GM10248 (cell line): ENCODE measurements at regions of chr14 and their contacts with region 1.

Region 1: GRCh38 chr14:68795597-68796417 is 2.9 kb upstream of the ZFP36L1 start:
- DNase-seq: peak; percentile 79
- CTCF ChIP-seq: peak; percentile 51

Region 2: DNA sequence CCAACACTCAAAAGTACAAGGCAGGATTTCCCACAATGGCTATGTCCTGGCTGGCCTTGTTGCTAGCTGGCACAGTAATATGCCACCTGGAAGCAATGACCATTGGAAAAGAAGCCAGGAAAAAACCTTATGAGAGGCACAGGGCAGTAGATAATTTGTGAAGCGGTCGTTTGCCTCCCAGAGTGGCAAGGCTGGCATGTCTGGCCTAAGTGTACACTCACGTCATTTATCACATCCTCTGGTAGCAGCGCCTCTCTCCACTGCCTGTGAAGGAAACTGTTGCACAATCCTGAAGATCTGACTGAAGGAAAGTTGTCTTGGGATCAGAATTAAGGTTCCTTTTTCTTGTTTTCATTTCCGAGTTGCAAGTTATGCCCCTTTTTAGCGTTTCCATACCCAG is 411.5 kb before region 1 on chr14:
- CTCF ChIA-PET with region 1: no interaction called
- POLR2A ChIA-PET with region 1: interaction called, 12 read pairs
- DNase-seq: no peak
- CTCF ChIP-seq: no peak

Region 3: DNA sequence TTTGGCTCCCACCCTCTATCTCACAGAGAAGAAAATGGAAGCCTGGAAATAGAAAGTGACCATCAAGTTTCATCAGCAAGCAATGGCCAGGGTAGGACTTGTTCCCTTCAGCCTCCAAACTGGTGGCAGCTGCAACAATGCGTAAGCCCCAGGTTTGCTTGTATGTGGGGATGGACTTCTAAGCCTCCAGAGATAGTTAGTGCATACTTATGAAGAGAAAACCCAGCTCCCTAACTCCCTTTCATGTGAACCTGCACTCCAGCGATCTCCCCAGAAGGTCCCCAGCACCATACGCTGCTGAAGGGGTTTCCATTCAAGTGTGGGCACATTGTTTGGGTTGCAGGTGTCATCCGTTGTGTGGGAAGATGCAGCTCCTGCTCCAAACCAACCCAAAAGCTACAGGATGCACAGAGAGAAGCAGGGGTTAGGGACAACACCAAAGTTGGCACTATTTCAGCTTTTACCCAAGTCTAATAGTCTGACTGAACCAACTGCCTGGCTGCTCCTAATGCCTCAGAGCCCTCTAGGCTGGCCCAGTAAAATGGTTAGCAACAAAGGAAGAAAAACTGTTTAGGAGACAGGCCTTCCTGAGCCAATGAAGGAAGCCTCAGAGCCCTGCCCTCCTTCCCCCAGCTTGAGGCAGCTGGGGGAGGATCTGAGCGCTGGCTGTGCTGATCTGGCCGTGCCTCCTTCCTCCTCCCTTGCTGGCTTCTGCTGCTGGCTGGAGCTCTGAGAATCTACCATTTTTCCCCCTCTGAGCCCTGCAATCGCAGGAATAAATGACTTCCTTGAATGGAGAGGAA is 15.2 kb before region 1 on chr14:
- CTCF ChIA-PET with region 1: interaction called, 3 read pairs
- POLR2A ChIA-PET with region 1: interaction called, 16 read pairs
- DNase-seq: no peak
- CTCF ChIP-seq: no peak

Region 4: DNA sequence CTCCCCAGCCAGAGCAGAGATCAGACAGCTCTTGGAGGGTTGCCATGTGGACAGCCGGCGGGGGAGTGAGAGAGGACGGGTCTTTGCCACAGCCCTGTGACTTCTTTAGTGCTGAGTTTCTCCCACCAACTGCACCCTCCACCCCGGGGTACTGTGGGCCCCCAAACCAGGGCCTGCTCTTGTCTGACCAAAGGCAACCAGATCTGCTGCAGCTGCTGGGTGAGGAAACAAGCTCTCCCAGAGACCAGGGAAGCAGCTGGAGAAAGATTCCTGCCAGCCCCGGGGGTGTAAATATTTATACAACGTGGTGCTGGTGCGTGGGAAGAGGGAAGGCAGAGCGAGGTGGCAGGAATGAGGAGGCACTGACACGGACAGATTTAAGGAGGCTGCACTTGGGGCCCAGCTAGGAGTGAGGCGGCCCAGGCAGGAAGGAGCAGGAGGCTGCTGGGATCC is 11.4 kb after region 1 on chr14:
- CTCF ChIA-PET with region 1: interaction called, 59 read pairs
- POLR2A ChIA-PET with region 1: interaction called, 12 read pairs
- DNase-seq: no peak
- CTCF ChIP-seq: no peak

Region 5: GRCh38 chr14:68816262-68816942 is 20.6 kb after region 1 on chr14:
- CTCF ChIA-PET with region 1: interaction called, 84 read pairs
- POLR2A ChIA-PET with region 1: interaction called, 14 read pairs
- DNase-seq: peak; percentile 89
- CTCF ChIP-seq: peak; percentile 90

Region 6: GRCh38 chr14:68961781-68962584 is 166.2 kb after region 1 on chr14:
- CTCF ChIA-PET with region 1: no interaction called
- POLR2A ChIA-PET with region 1: no interaction called
- DNase-seq: no peak
- CTCF ChIP-seq: no peak